ENCODE measurements at regions of chr2 and their contacts with region 1.

Region 1: GRCh38 chr2:178761759-178762371 is 45.4 kb downstream of the TTN start:
- DNase-seq: no peak
- H3K4me3 ChIP-seq: no peak overlapping the region
- H3K27me3 ChIP-seq: no peaks in the 10 kb centered on the region
- CTCF ChIP-seq: peak; percentile 74

Region 2: DNA sequence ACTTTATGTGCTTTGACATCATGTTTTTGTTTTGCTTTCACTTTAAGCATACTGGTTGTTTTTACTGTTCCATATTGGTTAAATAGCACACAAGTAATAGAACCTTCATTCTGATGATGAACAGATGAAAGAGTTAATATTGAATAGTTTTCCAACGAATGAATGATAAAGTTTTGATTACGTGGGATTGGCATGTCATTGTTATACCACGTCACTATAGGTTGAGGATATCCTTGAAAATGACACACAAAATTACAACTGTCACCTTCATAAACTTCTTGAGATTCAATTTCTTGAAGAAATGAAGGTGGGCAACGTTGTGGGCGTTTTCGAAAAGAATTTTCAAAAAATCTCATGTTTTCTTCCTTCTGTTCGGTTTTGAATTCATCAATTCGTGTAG is 11.6 kb before region 1 on chr2:
- CTCF ChIA-PET with region 1: interaction called, 18 read pairs
- POLR2A ChIA-PET with region 1: no interaction called
- DNase-seq: no peak
- H3K4me3 ChIP-seq: no peak overlapping the region
- H3K27me3 ChIP-seq: no peaks in the 10 kb centered on the region
- CTCF ChIP-seq: no peak

Measured in BJ (cell line).